Motor neuron (in vitro differentiated cells): ENCODE measurements at regions of chr5 and their contacts with region 1.

Region 1: GRCh38 chr5:39217365-39218281 is 1.7 kb downstream of the FYB1 start:
- ATAC-seq: peak; percentile 32 to 83 (median 58)
- H3K4me3 ChIP-seq: no peak overlapping the region
- H3K27ac ChIP-seq: no peak overlapping the region
- H3K4me1 ChIP-seq: no peaks in the 10 kb centered on the region

Region 2: GRCh38 chr5:39283231-39283818 is 65.7 kb after region 1 on chr5:
- in situ Hi-C with region 1: loop called in 1 of 9 experiments (anchors 5 kb)
- ATAC-seq: peak in 3 of 8 experiments; percentile 95 to 98 (median 98)
- H3K4me3 ChIP-seq: no peak overlapping the region
- H3K27ac ChIP-seq: no peak overlapping the region
- H3K4me1 ChIP-seq: no peaks in the 10 kb centered on the region

Region 3: GRCh38 chr5:39555788-39556187 is 338.2 kb after region 1 on chr5:
- in situ Hi-C with region 1: loop called in 4 of 9 experiments (anchors 10 to 25 kb)
- ATAC-seq: no peak
- H3K4me3 ChIP-seq: no peak overlapping the region
- H3K27ac ChIP-seq: no peak overlapping the region
- H3K4me1 ChIP-seq: no peaks in the 10 kb centered on the region

Region 4: GRCh38 chr5:39570403-39571027 is 352.9 kb after region 1 on chr5:
- in situ Hi-C with region 1: loop called in 3 of 9 experiments (anchors 25 kb)
- ATAC-seq: peak in 3 of 8 experiments; percentile 37 to 42 (median 38)
- H3K4me3 ChIP-seq: no peak overlapping the region
- H3K27ac ChIP-seq: no peak overlapping the region
- H3K4me1 ChIP-seq: no peaks in the 10 kb centered on the region